SK-N-SH (cell line): ENCODE measurements at regions of chr1 and their contacts with region 1.

Region 1: DNA sequence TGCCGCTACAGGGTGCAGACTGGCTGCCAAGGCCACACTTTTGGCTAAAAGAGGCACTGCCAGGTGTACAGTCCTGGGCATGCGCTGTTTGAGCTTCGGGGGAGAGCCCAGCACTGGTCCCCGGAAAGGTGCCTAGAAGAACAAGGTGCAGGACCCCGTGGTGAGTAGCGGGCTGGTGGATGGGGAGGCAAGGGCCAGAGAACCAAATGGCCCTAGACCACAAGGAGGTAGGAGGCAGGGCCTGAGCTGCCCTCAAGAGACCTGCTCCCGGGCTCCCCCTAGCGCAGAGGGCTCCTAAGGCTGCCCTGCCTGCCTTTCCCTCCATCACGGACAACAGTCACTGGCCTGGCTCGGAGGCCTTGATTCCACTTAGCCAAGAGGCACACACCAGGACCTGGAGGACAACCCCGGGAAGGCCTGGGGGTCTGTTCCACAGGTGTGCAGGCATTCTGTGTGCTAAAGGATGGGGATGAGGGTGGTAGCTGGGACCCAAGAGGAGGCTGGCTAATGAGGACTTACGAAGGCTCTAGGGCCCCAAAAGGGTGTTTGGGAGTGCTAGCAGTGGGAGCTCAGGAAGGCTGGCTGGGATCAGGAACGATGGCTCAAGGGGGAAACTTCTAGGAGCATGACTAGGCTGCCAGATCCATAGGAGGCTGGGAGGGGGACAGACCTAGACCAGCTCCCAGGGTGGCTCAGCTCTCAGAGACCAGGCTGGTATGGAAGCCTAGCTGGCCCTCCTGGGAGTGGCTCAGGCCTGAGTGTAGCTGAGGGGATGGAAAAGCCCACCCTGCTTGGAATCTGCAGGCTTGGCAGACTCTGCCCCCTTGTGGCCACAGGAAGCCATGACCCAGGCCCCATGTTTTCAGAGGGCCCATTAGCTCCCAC is 742 bp downstream of the ARTN start:
- DNase-seq: peak; percentile 96
- H3K4me3 ChIP-seq: no peak overlapping the region; a peak in 1 of 4 replicates
- H3K27ac ChIP-seq: no peak overlapping the region
- H3K4me1 ChIP-seq: peaks cover 0 to 10% of the 10 kb centered on the region in 2 experiments; a peak in 2 of 4 replicates
- H3K27me3 ChIP-seq: no peaks in the 10 kb centered on the region
- CTCF ChIP-seq: peak; percentile 93
- EP300 ChIP-seq: no peak
- RAD21 ChIP-seq: peak; percentile 92

Region 2: GRCh38 chr1:43529206-43529731 is 405.1 kb before region 1 on chr1:
- CTCF ChIA-PET with region 1: interaction called, 20 read pairs
- POLR2A ChIA-PET with region 1: no interaction called
- DNase-seq: peak; percentile 86
- H3K4me3 ChIP-seq: peak overlapping the region in 1 of 2 experiments; percentile 45; a peak in 1 of 4 replicates
- H3K27ac ChIP-seq: no peak overlapping the region
- H3K4me1 ChIP-seq: peaks cover 4 to 24% of the 10 kb centered on the region in 2 experiments; a peak in 3 of 4 replicates
- H3K27me3 ChIP-seq: no peaks in the 10 kb centered on the region
- CTCF ChIP-seq: peak; percentile 95
- EP300 ChIP-seq: no peak
- RAD21 ChIP-seq: peak; percentile 98

Region 3: GRCh38 chr1:43750083-43750482 is 184.3 kb before region 1 on chr1:
- CTCF ChIA-PET with region 1: interaction called, 15 read pairs
- POLR2A ChIA-PET with region 1: no interaction called
- DNase-seq: no peak
- H3K4me3 ChIP-seq: no peak overlapping the region
- H3K27ac ChIP-seq: no peak overlapping the region
- H3K4me1 ChIP-seq: no peaks in the 10 kb centered on the region
- H3K27me3 ChIP-seq: no peaks in the 10 kb centered on the region
- CTCF ChIP-seq: no peak
- EP300 ChIP-seq: no peak
- RAD21 ChIP-seq: no peak

Region 4: DNA sequence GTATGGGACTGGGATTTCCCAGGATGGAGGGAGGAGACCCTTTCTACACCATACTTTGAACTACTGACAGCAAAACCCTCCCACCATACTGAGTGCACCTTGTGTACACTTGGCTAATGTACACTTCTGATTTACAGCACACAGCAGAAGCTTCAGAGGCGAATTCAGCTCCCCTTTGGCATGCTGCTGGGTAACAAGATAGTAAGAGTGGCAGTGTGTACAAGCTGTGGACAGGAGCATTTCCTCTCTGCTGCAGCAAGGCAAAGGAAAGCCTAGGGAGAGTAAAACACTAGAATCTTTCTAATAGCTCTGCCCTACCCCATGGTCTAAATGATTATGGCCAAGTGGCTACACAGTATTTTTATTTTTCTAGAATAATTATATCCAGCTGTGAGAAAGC is 84.7 kb before region 1 on chr1:
- CTCF ChIA-PET with region 1: interaction called, 13 read pairs
- POLR2A ChIA-PET with region 1: no interaction called
- DNase-seq: no peak
- H3K4me3 ChIP-seq: no peak overlapping the region
- H3K27ac ChIP-seq: no peak overlapping the region
- H3K4me1 ChIP-seq: peaks cover 17 to 31% of the 10 kb centered on the region in 2 experiments; a peak in 3 of 4 replicates
- H3K27me3 ChIP-seq: no peaks in the 10 kb centered on the region
- CTCF ChIP-seq: no peak
- EP300 ChIP-seq: no peak
- RAD21 ChIP-seq: no peak

Region 5: GRCh38 chr1:43881415-43881814 is 52.9 kb before region 1 on chr1:
- CTCF ChIA-PET with region 1: interaction called, 23 read pairs
- POLR2A ChIA-PET with region 1: no interaction called
- DNase-seq: peak; percentile 62
- H3K4me3 ChIP-seq: no peak overlapping the region
- H3K27ac ChIP-seq: no peak overlapping the region
- H3K4me1 ChIP-seq: peaks cover 3 to 15% of the 10 kb centered on the region in 2 experiments; a peak in 2 of 4 replicates
- H3K27me3 ChIP-seq: no peaks in the 10 kb centered on the region
- CTCF ChIP-seq: no peak
- EP300 ChIP-seq: no peak
- RAD21 ChIP-seq: peak; percentile 39

Region 6: DNA sequence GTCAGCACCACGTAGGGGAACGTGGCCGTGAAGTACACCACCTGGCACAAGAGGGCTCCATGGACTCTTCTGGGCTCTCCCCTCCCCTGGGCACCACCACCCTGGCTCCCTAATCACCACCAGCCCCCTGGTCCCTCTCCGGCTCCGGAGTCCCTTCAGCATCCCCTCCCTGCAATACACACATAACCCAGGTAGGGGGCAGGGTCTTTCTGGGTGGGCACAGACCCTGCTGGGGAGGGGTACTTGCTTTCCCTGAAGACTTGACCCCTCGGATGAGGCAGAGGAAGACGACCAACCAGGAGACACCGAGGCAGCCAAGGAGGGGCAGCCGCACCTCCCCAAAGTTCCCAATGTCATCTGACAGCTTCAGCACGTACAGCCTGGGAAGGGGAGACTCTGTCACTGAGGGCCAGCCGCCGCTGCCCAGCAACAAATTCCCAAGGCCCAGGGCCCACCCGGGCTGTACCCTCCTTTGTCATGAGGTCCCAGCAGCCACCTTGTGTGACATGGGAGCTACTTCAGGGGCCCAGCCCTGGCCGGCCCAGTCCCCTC is 68.3 kb after region 1 on chr1:
- CTCF ChIA-PET with region 1: interaction called, 13 read pairs
- POLR2A ChIA-PET with region 1: no interaction called
- DNase-seq: peak; percentile 59
- H3K4me3 ChIP-seq: no peak overlapping the region
- H3K27ac ChIP-seq: no peak overlapping the region
- H3K4me1 ChIP-seq: peaks cover 0 to 31% of the 10 kb centered on the region in 2 experiments; a peak in 2 of 4 replicates
- H3K27me3 ChIP-seq: no peaks in the 10 kb centered on the region
- CTCF ChIP-seq: peak; percentile 30
- EP300 ChIP-seq: no peak
- RAD21 ChIP-seq: no peak

Region 7: GRCh38 chr1:44072204-44072603 is 137.9 kb after region 1 on chr1:
- CTCF ChIA-PET with region 1: no interaction called
- POLR2A ChIA-PET with region 1: no interaction called
- DNase-seq: no peak
- H3K4me3 ChIP-seq: no peak overlapping the region
- H3K27ac ChIP-seq: peak overlapping the region in 1 of 2 experiments; percentile 2; a peak in 1 of 4 replicates
- H3K4me1 ChIP-seq: peaks cover 0 to 9% of the 10 kb centered on the region in 2 experiments; a peak in 1 of 4 replicates
- H3K27me3 ChIP-seq: no peaks in the 10 kb centered on the region
- CTCF ChIP-seq: no peak
- EP300 ChIP-seq: peak in 1 of 2 experiments; percentile 19; a peak in 1 of 4 replicates
- RAD21 ChIP-seq: no peak